CD4-positive, alpha-beta T cell (primary cell): ENCODE measurements at regions of chr2 and their contacts with region 1.

Region 1: GRCh38 chr2:160493227-160494028 is at the start of gene RBMS1:
- DNase-seq: peak; percentile 25 to 79 (median 47)
- ATAC-seq: peak; percentile 51
- H3K4me3 ChIP-seq: peak within 1 kb of the TSS; percentile 66
- H3K4me3 Mint-ChIP-seq: peak within 1 kb of the TSS; percentile 98
- H3K27ac ChIP-seq: peak within 1 kb of the TSS; percentile 65 to 90
- H3K27ac Mint-ChIP-seq: peak within 1 kb of the TSS; percentile 88
- H3K4me1 ChIP-seq: peaks cover 12% of the 10 kb centered on the region
- H3K4me1 Mint-ChIP-seq: peaks cover 58% of the 10 kb centered on the region
- H3K27me3 ChIP-seq: no peaks in the 10 kb centered on the region
- H3K27me3 Mint-ChIP-seq: no peaks in the 10 kb centered on the region
- CTCF ChIP-seq: no peak
- total RNA-seq, gene RBMS1: 88.6 to 90.3 TPM

Region 2: GRCh38 chr2:159904127-159904958 is 589.1 kb before region 1 on chr2:
- CTCF ChIA-PET with region 1: no interaction called
- POLR2A ChIA-PET with region 1: no interaction called
- intact Hi-C with region 1: loop called in 1 of 2 experiments (anchors 5 kb)
- DNase-seq: peak; percentile 64 to 91 (median 80)
- ATAC-seq: peak; percentile 81
- H3K4me3 ChIP-seq: peak within 1 kb of the TSS; percentile 97
- H3K4me3 Mint-ChIP-seq: peak within 1 kb of the TSS; percentile 99
- H3K27ac ChIP-seq: peak within 1 kb of the TSS; percentile 73 to 91
- H3K27ac Mint-ChIP-seq: peak within 1 kb of the TSS; percentile 93
- H3K4me1 ChIP-seq: peaks cover 31% of the 10 kb centered on the region
- H3K4me1 Mint-ChIP-seq: peaks cover 39% of the 10 kb centered on the region
- H3K27me3 ChIP-seq: no peaks in the 10 kb centered on the region
- H3K27me3 Mint-ChIP-seq: no peaks in the 10 kb centered on the region
- CTCF ChIP-seq: no peak

Region 3: DNA sequence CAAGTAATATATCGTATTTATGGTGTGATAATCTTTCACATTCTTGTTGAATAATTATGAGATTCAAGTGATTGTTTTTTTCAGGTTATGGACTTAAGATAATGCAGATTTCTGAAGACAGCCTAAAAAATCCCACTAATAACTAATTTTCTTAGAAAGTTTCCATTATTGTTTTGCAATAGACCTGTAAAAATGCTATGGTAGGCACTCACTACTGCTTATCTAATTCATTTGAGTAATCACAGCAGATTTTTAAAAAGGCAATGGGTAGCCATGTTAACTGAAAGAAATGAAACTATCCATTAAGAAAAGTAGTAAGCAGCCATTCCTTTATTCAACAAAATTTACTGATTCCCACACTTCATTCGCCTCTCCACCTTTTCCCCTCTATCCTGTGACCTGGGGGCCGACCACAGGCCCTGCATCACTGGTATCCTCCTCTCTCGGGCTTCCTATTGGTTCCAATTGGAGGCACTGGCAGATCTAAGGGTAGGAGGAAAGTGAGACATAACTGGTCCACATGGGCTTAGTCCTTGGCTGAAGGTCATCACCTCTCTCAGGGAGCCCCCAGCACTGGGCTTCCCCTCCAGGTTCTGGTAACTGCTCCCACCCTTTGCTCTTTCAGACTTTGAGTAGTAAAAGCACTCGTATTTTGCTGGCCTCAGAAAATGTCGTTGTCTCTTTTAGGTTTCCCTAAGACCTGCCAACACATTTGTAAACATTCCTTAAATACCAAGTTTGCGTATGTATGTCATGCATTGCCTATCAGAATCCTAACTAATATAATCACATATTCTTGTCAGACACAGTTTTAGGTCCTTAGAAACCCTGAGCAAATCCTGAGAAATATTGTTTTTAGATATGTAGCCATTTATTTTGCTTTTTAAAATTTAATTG is 18.3 kb before region 1 on chr2:
- CTCF ChIA-PET with region 1: interaction called, 6 read pairs
- POLR2A ChIA-PET with region 1: interaction called, 9 read pairs
- intact Hi-C with region 1: loop called in 1 of 2 experiments (anchors 2 kb)
- DNase-seq: no peak
- ATAC-seq: no peak
- H3K4me3 ChIP-seq: no peak overlapping the region
- H3K4me3 Mint-ChIP-seq: peak overlapping the region; percentile 86
- H3K27ac ChIP-seq: peak overlapping the region in 1 of 2 donors; percentile 71
- H3K27ac Mint-ChIP-seq: peak overlapping the region; percentile 91
- H3K4me1 ChIP-seq: peaks cover 23% of the 10 kb centered on the region
- H3K4me1 Mint-ChIP-seq: peaks cover 90% of the 10 kb centered on the region
- H3K27me3 ChIP-seq: no peaks in the 10 kb centered on the region
- H3K27me3 Mint-ChIP-seq: no peaks in the 10 kb centered on the region
- CTCF ChIP-seq: no peak

Region 4: DNA sequence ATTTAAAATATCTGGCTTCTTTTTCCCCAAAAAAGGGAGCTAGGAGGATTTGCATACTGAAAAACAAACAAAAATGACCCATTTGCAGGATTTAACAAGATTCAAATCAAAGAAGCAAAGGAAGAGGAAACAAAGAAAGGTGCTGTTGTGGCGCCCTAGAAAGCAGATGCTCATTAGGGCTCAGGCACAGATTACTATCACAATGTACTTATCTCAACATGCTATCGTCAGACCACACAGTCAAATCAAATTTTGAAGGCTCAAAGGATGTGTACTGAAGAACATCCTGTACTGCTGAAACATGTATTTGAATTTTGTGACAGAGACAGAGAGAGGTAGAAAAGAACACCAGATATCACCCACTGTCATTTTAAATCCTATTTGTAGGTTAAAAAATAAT is 10.8 kb before region 1 on chr2:
- CTCF ChIA-PET with region 1: interaction called, 3 read pairs
- POLR2A ChIA-PET with region 1: interaction called, 6 read pairs
- intact Hi-C with region 1: loop called in 1 of 2 experiments (anchors 1 kb)
- DNase-seq: peak in 9 of 14 experiments; percentile 4 to 87 (median 35)
- ATAC-seq: peak; percentile 94
- H3K4me3 ChIP-seq: no peak overlapping the region
- H3K4me3 Mint-ChIP-seq: peak overlapping the region; percentile 68
- H3K27ac ChIP-seq: peak overlapping the region; percentile 39 to 55
- H3K27ac Mint-ChIP-seq: peak overlapping the region; percentile 85
- H3K4me1 ChIP-seq: peaks cover 41% of the 10 kb centered on the region
- H3K4me1 Mint-ChIP-seq: peaks cover 90% of the 10 kb centered on the region
- H3K27me3 ChIP-seq: no peaks in the 10 kb centered on the region
- H3K27me3 Mint-ChIP-seq: no peaks in the 10 kb centered on the region
- CTCF ChIP-seq: no peak

Region 5: GRCh38 chr2:160652236-160652635 is 158.8 kb after region 1 on chr2:
- CTCF ChIA-PET with region 1: no interaction called
- POLR2A ChIA-PET with region 1: no interaction called
- intact Hi-C with region 1: loop called in 1 of 2 experiments (anchors 5 kb)
- DNase-seq: peak; percentile 36 to 84 (median 62)
- ATAC-seq: peak; percentile 99
- H3K4me3 ChIP-seq: no peak overlapping the region
- H3K4me3 Mint-ChIP-seq: peak overlapping the region; percentile 23
- H3K27ac ChIP-seq: no peak overlapping the region
- H3K27ac Mint-ChIP-seq: peak overlapping the region; percentile 0
- H3K4me1 ChIP-seq: peaks cover 19% of the 10 kb centered on the region
- H3K4me1 Mint-ChIP-seq: peaks cover 30% of the 10 kb centered on the region
- H3K27me3 ChIP-seq: no peaks in the 10 kb centered on the region
- H3K27me3 Mint-ChIP-seq: peaks cover 7% of the 10 kb centered on the region
- CTCF ChIP-seq: no peak